ENCODE measurements at regions of chr18 and their contacts with region 1.

Region 1: GRCh38 chr18:7512348-7512747 is 54.8 kb upstream of the PTPRM start:
- DNase-seq: no peak
- ATAC-seq: peak in 2 of 8 donors; percentile 36 to 52
- H3K4me3 ChIP-seq: no peak overlapping the region
- H3K27ac ChIP-seq: peak overlapping the region in 3 of 10 donors; percentile 9 to 22 (median 9)
- H3K4me1 ChIP-seq: peaks cover 0 to 34% (median 15%) of the 10 kb centered on the region in 9 donors
- H3K27me3 ChIP-seq: no peaks in the 10 kb centered on the region
- CTCF ChIP-seq: no peak

Region 2: DNA sequence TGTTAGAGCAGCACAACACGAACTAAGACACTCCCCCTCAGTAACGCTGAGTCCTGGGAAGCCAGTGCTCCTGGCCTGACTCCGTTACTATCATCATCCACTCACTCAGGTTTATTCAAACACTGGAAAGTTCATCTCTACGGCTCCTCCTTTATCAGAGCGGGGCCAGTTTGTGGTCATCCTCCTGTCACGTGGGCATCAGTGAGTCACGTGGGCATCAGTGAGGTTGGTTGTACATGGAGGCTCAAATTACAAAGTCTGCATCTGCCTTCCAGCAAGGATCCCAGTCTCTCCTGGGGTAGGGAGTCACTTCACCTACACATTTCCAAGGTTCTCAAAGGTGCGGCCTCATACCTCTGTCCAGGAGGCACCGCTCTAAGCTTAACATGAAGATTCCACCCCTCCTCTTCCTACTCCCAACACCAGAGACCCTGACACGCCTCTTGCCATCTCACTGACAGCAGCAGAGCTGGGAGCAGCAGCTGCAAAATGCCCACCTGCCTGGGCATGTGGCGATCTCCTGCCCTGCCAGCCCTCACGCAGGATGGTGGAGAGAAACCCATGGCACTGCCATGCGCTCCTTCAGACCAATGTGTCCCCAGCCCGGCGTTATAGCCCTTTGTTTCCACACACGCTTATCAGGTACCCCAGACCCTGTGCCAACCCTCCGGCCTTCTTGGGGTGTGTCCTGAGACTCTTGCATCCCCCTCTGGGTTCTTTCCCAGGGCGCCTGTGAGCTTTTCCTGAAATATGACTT is 44.5 kb before region 1 on chr18:
- intact Hi-C with region 1: loop called in 1 of 10 experiments (anchors 5 kb)
- DNase-seq: no peak
- ATAC-seq: no peak
- H3K4me3 ChIP-seq: no peak overlapping the region
- H3K27ac ChIP-seq: no peak overlapping the region
- H3K4me1 ChIP-seq: peaks cover 0 to 39% (median 18%) of the 10 kb centered on the region in 9 donors
- H3K27me3 ChIP-seq: no peaks in the 10 kb centered on the region
- CTCF ChIP-seq: no peak

Region 3: GRCh38 chr18:7559709-7560319 is 47.5 kb after region 1 on chr18:
- intact Hi-C with region 1: loop called in 1 of 10 experiments (anchors 5 kb)
- DNase-seq: no peak
- ATAC-seq: peak in 6 of 8 donors; percentile 43 to 66 (median 55)
- H3K4me3 ChIP-seq: no peak overlapping the region
- H3K27ac ChIP-seq: peak overlapping the region in 6 of 10 donors; percentile 8 to 84 (median 50)
- H3K4me1 ChIP-seq: peaks cover 4 to 61% (median 38%) of the 10 kb centered on the region in 9 donors
- H3K27me3 ChIP-seq: peaks cover 0 to 5% (median 0%) of the 10 kb centered on the region in 7 donors
- CTCF ChIP-seq: no peak